Activated CD4-positive, alpha-beta memory T cell treated with anti-CD3 and anti-CD28 coated beads for 36 hours (primary cell): ENCODE measurements at regions of chrX and their contacts with region 1.

Region 1: GRCh38 chrX:101206471-101206870 is 13.1 kb upstream of the DRP2 start:
- DNase-seq: peak; percentile 10
- H3K4me3 Mint-ChIP-seq: no peak overlapping the region
- H3K27ac Mint-ChIP-seq: no peak overlapping the region
- H3K4me1 Mint-ChIP-seq: peaks cover 23% of the 10 kb centered on the region
- H3K27me3 Mint-ChIP-seq: no peaks in the 10 kb centered on the region

Region 2: DNA sequence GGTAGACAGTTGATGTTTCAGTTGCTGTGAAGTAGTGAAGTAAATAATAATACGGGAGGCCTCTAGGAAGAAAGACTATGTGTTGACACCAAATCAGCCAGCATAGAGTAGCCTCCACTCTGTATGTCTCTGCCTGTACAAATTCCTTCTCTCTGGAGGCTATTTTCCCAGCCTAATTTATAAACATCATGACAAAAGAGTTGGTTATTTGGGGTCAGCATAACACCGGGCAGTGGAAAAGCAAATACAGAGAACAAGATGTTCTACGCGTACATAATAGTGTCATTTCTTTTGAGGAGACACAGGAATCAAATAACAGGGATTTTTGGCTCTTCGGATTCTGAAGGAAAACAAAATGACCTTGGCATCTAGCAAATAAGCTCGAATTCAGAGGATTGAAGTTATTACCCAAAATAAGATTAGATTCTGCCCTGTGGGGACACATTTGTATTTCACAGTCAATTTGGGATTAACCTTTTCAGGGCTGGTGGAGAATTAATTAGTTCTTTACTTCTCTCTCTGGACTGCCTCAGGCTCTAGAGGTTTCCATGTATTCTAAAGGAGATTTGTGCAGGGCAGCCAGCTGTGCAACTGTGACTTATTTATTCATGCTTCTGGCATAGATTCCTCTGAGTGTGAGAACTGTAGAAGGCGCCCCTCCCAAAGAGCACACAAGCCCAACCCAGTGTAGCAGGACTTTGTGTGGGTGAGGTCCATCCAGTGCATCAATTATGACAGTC is 460.5 kb before region 1 on chrX:
- CTCF ChIA-PET with region 1: no interaction called
- POLR2A ChIA-PET with region 1: no interaction called
- intact Hi-C with region 1: no loop called
- DNase-seq: no peak
- H3K4me3 Mint-ChIP-seq: no peak overlapping the region
- H3K27ac Mint-ChIP-seq: no peak overlapping the region
- H3K4me1 Mint-ChIP-seq: no peaks in the 10 kb centered on the region
- H3K27me3 Mint-ChIP-seq: no peaks in the 10 kb centered on the region

Region 3: GRCh38 chrX:100895365-100896075 is 311.0 kb before region 1 on chrX:
- CTCF ChIA-PET with region 1: no interaction called
- POLR2A ChIA-PET with region 1: no interaction called
- intact Hi-C with region 1: loop called (anchors 1 kb)
- DNase-seq: peak; percentile 32
- H3K4me3 Mint-ChIP-seq: no peak overlapping the region
- H3K27ac Mint-ChIP-seq: no peak overlapping the region
- H3K4me1 Mint-ChIP-seq: no peaks in the 10 kb centered on the region
- H3K27me3 Mint-ChIP-seq: no peaks in the 10 kb centered on the region

Region 4: GRCh38 chrX:101051549-101052302 is 154.7 kb before region 1 on chrX and contains the start of gene TRMT2B:
- CTCF ChIA-PET with region 1: no interaction called
- POLR2A ChIA-PET with region 1: no interaction called
- intact Hi-C with region 1: loop called (anchors 5 kb)
- DNase-seq: peak; percentile 87
- H3K4me3 Mint-ChIP-seq: peak within 1 kb of the TSS; percentile 86
- H3K27ac Mint-ChIP-seq: peak within 1 kb of the TSS; percentile 96
- H3K4me1 Mint-ChIP-seq: peaks cover 19% of the 10 kb centered on the region
- H3K27me3 Mint-ChIP-seq: no peaks in the 10 kb centered on the region
- total RNA-seq, gene TRMT2B: 19.6 to 21.2 TPM

Region 5: GRCh38 chrX:101260431-101260830 is 54.0 kb after region 1 on chrX:
- CTCF ChIA-PET with region 1: no interaction called
- POLR2A ChIA-PET with region 1: no interaction called
- intact Hi-C with region 1: no loop called
- DNase-seq: no peak
- H3K4me3 Mint-ChIP-seq: no peak overlapping the region
- H3K27ac Mint-ChIP-seq: no peak overlapping the region
- H3K4me1 Mint-ChIP-seq: peaks cover 3% of the 10 kb centered on the region
- H3K27me3 Mint-ChIP-seq: no peaks in the 10 kb centered on the region

Region 6: DNA sequence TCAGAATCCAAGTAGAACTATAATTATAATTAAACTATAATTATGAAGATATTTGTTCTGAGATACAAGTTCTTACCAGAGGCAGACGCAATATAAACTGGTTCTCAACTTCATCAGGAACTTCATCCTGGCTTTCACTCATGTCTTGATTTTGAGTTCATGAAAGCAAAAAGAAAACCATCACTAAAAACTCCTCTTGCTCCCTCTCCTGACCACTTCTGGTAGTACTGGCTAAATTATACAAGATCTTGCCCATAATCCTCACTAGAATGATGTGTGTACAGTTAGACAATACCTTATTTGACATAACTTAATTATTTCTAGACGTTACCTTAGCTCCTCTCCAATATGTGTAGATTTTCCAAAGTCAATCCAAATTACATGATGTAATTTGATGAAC is 80.9 kb after region 1 on chrX:
- CTCF ChIA-PET with region 1: no interaction called
- POLR2A ChIA-PET with region 1: no interaction called
- intact Hi-C with region 1: loop called (anchors 10 kb)
- DNase-seq: no peak
- H3K4me3 Mint-ChIP-seq: no peak overlapping the region
- H3K27ac Mint-ChIP-seq: no peak overlapping the region
- H3K4me1 Mint-ChIP-seq: no peaks in the 10 kb centered on the region
- H3K27me3 Mint-ChIP-seq: peaks cover 2% of the 10 kb centered on the region